CD8-positive, alpha-beta memory T cell (primary cell): ENCODE measurements at regions of chr1 and their contacts with region 1.

Region 1: DNA sequence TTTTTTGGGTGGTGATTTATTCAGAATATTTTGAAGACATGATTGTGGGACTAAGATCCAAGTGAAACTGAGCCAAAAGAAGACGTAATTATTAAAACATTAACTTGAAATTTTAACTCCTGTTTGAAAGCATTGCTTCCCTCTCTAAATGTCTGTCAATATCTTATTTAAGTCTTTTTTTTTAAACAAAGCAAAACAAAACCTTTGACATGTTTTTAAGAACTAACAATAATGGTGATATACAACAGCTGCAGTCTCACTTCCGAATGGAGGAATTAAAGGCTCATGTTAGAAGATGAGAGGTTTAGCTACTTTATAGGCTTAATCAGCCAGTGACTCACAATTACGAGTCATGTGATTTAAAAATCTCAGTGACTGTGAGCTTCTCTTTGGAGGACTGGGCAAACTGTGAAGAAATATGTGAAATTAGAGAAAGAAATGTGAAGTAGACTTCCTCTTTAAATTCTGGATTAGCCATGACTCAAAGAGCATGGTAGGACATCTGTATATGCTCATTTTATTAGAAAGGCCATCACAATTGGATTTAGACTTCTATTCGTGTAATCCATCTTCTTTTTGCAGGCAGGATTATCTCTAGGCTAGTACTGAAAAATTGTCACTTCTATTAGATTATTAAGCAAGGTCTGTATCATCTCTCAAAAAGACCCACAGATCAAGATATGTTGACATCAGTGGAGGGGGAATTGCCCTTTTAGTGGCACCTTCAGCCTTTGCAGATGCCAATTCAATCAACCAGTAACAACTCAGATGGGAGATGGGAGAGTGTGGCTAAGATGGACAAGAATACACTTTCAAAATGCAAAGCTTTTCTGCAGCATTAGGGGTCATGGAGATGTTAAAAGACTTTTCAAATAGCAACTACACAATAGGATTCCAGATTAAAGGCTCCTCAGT is 28.7 kb downstream of the KCNA3 start:
- DNase-seq: no peak
- H3K4me3 ChIP-seq: peak overlapping the region; percentile 6
- H3K4me3 Mint-ChIP-seq: peak overlapping the region in 6 of 7 donors; percentile 7 to 56 (median 37)
- H3K27ac ChIP-seq: no peak overlapping the region
- H3K27ac Mint-ChIP-seq: peak overlapping the region in 6 of 8 donors; percentile 8 to 91 (median 74)
- H3K4me1 ChIP-seq: peaks cover 92% of the 10 kb centered on the region
- H3K4me1 Mint-ChIP-seq: peaks cover 33 to 48% (median 41%) of the 10 kb centered on the region in 3 donors
- H3K27me3 ChIP-seq: no peaks in the 10 kb centered on the region
- H3K27me3 Mint-ChIP-seq: no peaks in the 10 kb centered on the region

Region 2: GRCh38 chr1:110630839-110631663 is 15.0 kb before region 1 on chr1:
- CTCF ChIA-PET with region 1: interaction called, 42 read pairs
- POLR2A ChIA-PET with region 1: interaction called, 21 read pairs
- DNase-seq: peak; percentile 76 to 89 (median 83)
- H3K4me3 ChIP-seq: peak overlapping the region; percentile 45
- H3K4me3 Mint-ChIP-seq: no peak overlapping the region
- H3K27ac ChIP-seq: peak overlapping the region; percentile 22
- H3K27ac Mint-ChIP-seq: no peak overlapping the region
- H3K4me1 ChIP-seq: peaks cover 59% of the 10 kb centered on the region
- H3K4me1 Mint-ChIP-seq: peaks cover 34 to 66% (median 40%) of the 10 kb centered on the region in 3 donors
- H3K27me3 ChIP-seq: no peaks in the 10 kb centered on the region
- H3K27me3 Mint-ChIP-seq: no peaks in the 10 kb centered on the region